AG04450 (cell line): ENCODE measurements at regions of chr5 and their contacts with region 1.

Region 1: GRCh38 chr5:42908509-42909488 is 97.1 kb upstream of the SELENOP start:
- DNase-seq: peak; percentile 68
- H3K4me3 ChIP-seq: peak overlapping the region; percentile 58
- H3K27ac ChIP-seq: no peak overlapping the region
- H3K27me3 ChIP-seq: peaks cover 23% of the 10 kb centered on the region
- CTCF ChIP-seq: peak; percentile 88

Region 2: GRCh38 chr5:42927730-42928129 is 18.9 kb after region 1 on chr5:
- CTCF ChIA-PET with region 1: interaction called, 10 read pairs
- POLR2A ChIA-PET with region 1: no interaction called
- DNase-seq: no peak
- H3K4me3 ChIP-seq: no peak overlapping the region
- H3K27ac ChIP-seq: no peak overlapping the region
- H3K27me3 ChIP-seq: no peaks in the 10 kb centered on the region
- CTCF ChIP-seq: no peak

Region 3: GRCh38 chr5:42994246-42995151 is 85.7 kb after region 1 on chr5:
- CTCF ChIA-PET with region 1: interaction called, 20 read pairs
- POLR2A ChIA-PET with region 1: interaction called, 3 read pairs
- DNase-seq: peak; percentile 81
- H3K4me3 ChIP-seq: peak overlapping the region; percentile 66
- H3K27ac ChIP-seq: peak overlapping the region; percentile 97
- H3K27me3 ChIP-seq: no peaks in the 10 kb centered on the region
- CTCF ChIP-seq: peak; percentile 94

Region 4: DNA sequence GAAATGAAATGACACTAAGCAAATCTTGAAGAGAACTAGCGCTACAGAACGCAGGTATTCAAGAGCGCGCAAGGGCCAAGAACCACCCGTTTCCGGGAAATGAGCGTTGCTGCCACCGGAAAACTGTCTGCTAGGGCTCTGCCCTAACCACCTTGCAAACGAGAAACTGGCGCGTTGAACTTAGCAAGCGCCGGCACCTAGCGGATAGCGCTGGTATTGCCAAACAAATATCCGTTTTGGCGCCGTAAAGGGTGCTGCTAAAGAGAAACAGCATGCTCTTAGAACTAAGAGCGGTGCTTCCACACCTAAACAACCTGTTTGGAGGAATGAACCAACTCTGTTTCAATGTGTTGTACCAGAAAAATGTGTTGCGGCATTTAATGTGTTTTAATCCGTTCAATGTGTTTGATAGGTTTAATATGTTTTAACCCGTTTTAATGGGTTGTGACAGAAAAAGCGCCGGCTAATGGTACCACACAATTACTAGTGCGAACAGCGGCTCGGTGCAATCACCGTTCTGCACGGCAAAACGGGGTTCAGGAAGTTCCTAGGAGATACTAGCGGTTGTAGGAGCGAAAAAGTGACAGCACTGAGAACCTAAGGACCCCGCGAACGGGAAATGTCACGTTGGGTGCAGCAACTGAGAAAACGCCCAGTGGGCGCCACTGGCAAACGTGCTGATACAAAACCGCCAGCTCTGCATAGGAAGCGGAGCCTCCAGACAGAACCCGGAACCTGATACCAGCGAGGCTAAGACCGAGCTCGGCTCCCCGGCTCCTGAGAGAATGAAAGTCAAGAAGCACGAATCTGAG is 131.7 kb after region 1 on chr5 and contains the start of gene ANXA2R:
- CTCF ChIA-PET with region 1: interaction called, 37 read pairs
- POLR2A ChIA-PET with region 1: interaction called, 5 read pairs
- DNase-seq: peak; percentile 91
- H3K4me3 ChIP-seq: peak within 1 kb of the TSS; percentile 83
- H3K27ac ChIP-seq: peak within 1 kb of the TSS; percentile 98
- H3K27me3 ChIP-seq: no peaks in the 10 kb centered on the region
- CTCF ChIP-seq: peak; percentile 90
- polyA plus RNA-seq, gene ANXA2R: 3.7 and 4.9 TPM in 2 replicates

Region 5: DNA sequence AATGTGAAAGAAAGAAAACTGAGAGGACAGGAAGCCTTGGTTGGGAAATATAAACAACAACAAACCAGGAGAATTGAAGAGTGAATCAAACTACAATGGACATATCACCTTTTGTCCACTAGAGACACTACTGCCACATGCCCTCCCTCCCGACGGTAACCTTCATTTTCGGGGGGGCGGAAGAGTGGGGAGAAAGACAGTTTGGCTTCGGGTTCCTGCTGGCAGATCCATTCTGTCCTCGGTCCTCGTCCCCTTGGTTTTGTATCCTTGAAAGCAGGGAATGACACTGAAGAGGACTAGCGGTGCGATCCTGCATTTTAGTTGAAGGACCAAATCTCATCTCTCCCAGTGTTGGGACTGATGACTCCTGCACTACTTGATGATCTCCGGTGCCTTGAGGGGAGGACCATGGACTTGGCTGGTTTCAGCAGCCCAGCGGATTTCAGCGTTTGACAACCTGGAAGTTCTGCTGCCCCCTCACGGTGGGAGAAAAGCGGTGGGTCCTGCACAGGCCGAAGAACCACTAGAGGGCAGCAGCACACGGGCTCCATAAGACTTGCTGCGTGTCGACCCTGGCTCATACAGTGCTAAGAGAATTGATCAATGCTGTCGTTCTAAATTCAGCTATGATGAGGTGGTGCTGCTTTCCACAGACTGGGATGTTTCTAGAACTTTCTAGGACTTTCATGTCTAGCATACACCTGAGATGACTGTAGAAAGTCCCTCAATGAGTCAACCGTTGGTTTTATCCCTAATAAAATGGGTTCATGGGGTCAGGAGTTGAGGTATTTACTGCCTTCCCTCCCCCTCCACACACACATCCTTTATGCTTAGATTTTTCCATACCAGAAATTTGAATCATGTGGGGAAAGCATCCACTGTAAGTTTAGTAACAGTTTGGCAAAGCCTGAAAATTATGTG is 196.8 kb after region 1 on chr5:
- CTCF ChIA-PET with region 1: interaction called, 60 read pairs
- POLR2A ChIA-PET with region 1: no interaction called
- DNase-seq: peak; percentile 90
- H3K4me3 ChIP-seq: peak overlapping the region; percentile 46
- H3K27ac ChIP-seq: peak overlapping the region; percentile 67
- H3K27me3 ChIP-seq: no peaks in the 10 kb centered on the region
- CTCF ChIP-seq: peak; percentile 100

Region 6: GRCh38 chr5:43389679-43390329 is 481.0 kb after region 1 on chr5:
- CTCF ChIA-PET with region 1: interaction called, 43 read pairs
- POLR2A ChIA-PET with region 1: no interaction called
- DNase-seq: peak; percentile 75
- H3K4me3 ChIP-seq: no peak overlapping the region
- H3K27ac ChIP-seq: no peak overlapping the region
- H3K27me3 ChIP-seq: no peaks in the 10 kb centered on the region
- CTCF ChIP-seq: peak; percentile 88